A673 (cell line): ENCODE measurements at regions of chr19 and their contacts with region 1.

Region 1: GRCh38 chr19:47707135-47707925 is 5.9 kb upstream of the EHD2 start:
- DNase-seq: peak; percentile 86
- H3K4me3 ChIP-seq: no peak overlapping the region
- H3K27ac ChIP-seq: no peak overlapping the region
- H3K4me1 ChIP-seq: peaks cover 6% of the 10 kb centered on the region
- H3K27me3 ChIP-seq: no peaks in the 10 kb centered on the region
- CTCF ChIP-seq: peak; percentile 81

Region 2: GRCh38 chr19:47330466-47330869 is 376.9 kb before region 1 on chr19:
- CTCF ChIA-PET with region 1: no interaction called
- POLR2A ChIA-PET with region 1: interaction called, 11 read pairs
- intact Hi-C with region 1: no loop called
- DNase-seq: no peak
- H3K4me3 ChIP-seq: no peak overlapping the region
- H3K27ac ChIP-seq: no peak overlapping the region
- H3K4me1 ChIP-seq: no peaks in the 10 kb centered on the region
- H3K27me3 ChIP-seq: no peaks in the 10 kb centered on the region
- CTCF ChIP-seq: no peak

Region 3: GRCh38 chr19:47436712-47437401 is 270.5 kb before region 1 on chr19:
- CTCF ChIA-PET with region 1: interaction called, 42 read pairs
- POLR2A ChIA-PET with region 1: no interaction called
- intact Hi-C with region 1: loop called (anchors 1 kb)
- DNase-seq: peak; percentile 78
- H3K4me3 ChIP-seq: no peak overlapping the region
- H3K27ac ChIP-seq: no peak overlapping the region
- H3K4me1 ChIP-seq: no peaks in the 10 kb centered on the region
- H3K27me3 ChIP-seq: no peaks in the 10 kb centered on the region
- CTCF ChIP-seq: peak; percentile 90